B cell (primary cell): ENCODE measurements at regions of chr10 and their contacts with region 1.

Region 1: GRCh38 chr10:97196223-97197029 is 10.7 kb upstream of the SLIT1 start:
- DNase-seq: peak; percentile 82
- ATAC-seq: peak; percentile 76
- H3K4me3 ChIP-seq: peak overlapping the region; percentile 25 to 73 (median 59)
- H3K4me3 Mint-ChIP-seq: peak overlapping the region; percentile 89
- H3K27ac ChIP-seq: no peak overlapping the region
- H3K27ac Mint-ChIP-seq: no peak overlapping the region
- H3K4me1 ChIP-seq: peaks cover 29 to 38% of the 10 kb centered on the region in 2 donors
- H3K4me1 Mint-ChIP-seq: peaks cover 30% of the 10 kb centered on the region
- H3K27me3 ChIP-seq: peaks cover 0 to 30% (median 4%) of the 10 kb centered on the region in 4 experiments
- H3K27me3 Mint-ChIP-seq: peaks cover 34% of the 10 kb centered on the region
- CTCF ChIP-seq: peak; percentile 88

Region 2: GRCh38 chr10:97072851-97073665 is 123.4 kb before region 1 on chr10:
- CTCF ChIA-PET with region 1: interaction called, 75 read pairs
- POLR2A ChIA-PET with region 1: no interaction called
- intact Hi-C with region 1: no loop called
- DNase-seq: peak; percentile 78
- ATAC-seq: peak; percentile 74
- H3K4me3 ChIP-seq: no peak overlapping the region
- H3K4me3 Mint-ChIP-seq: no peak overlapping the region
- H3K27ac ChIP-seq: no peak overlapping the region
- H3K27ac Mint-ChIP-seq: no peak overlapping the region
- H3K4me1 ChIP-seq: no peaks in the 10 kb centered on the region
- H3K4me1 Mint-ChIP-seq: no peaks in the 10 kb centered on the region
- H3K27me3 ChIP-seq: peaks cover 0 to 28% (median 3%) of the 10 kb centered on the region in 4 experiments
- H3K27me3 Mint-ChIP-seq: peaks cover 40% of the 10 kb centered on the region
- CTCF ChIP-seq: peak; percentile 90

Region 3: DNA sequence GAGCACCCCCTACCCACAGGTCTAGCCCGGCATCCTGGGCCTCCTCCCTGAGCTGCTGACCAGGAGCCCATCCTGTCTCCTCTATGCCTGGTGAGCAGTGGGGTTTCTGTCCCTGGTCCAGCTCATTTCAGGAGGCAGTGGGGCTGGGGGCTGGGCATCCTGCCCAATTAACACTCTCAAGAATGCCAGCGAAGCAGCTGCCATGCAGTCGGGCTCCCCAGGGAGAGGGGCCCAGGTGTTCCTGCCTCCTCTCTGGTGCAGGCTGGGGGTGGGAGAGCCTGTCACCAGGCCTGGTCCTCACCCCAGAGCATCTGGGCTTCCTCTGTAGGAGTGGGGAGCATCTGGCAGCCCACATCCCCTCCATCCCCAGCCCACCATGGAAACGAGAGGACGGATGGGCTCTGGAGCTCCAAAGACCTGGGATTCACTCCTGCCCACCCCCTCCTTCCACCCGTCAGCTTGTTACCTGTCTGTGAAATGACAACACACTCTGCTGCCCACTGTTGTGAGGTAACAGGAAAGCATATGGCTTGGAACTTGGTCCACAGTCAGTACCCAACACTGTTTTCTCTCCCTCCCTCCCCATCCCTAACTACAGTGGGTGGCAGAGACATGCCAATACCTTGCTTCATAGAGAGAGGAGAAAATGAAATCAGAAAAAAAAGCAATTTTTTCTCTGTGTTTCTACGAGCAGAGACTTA is 79.8 kb before region 1 on chr10:
- CTCF ChIA-PET with region 1: no interaction called
- POLR2A ChIA-PET with region 1: no interaction called
- intact Hi-C with region 1: no loop called
- DNase-seq: no peak
- ATAC-seq: no peak
- H3K4me3 ChIP-seq: no peak overlapping the region
- H3K4me3 Mint-ChIP-seq: no peak overlapping the region
- H3K27ac ChIP-seq: no peak overlapping the region
- H3K27ac Mint-ChIP-seq: no peak overlapping the region
- H3K4me1 ChIP-seq: no peaks in the 10 kb centered on the region
- H3K4me1 Mint-ChIP-seq: no peaks in the 10 kb centered on the region
- H3K27me3 ChIP-seq: peaks cover 0 to 12% (median under 1%) of the 10 kb centered on the region in 4 experiments
- H3K27me3 Mint-ChIP-seq: peaks cover 32% of the 10 kb centered on the region
- CTCF ChIP-seq: no peak

Region 4: DNA sequence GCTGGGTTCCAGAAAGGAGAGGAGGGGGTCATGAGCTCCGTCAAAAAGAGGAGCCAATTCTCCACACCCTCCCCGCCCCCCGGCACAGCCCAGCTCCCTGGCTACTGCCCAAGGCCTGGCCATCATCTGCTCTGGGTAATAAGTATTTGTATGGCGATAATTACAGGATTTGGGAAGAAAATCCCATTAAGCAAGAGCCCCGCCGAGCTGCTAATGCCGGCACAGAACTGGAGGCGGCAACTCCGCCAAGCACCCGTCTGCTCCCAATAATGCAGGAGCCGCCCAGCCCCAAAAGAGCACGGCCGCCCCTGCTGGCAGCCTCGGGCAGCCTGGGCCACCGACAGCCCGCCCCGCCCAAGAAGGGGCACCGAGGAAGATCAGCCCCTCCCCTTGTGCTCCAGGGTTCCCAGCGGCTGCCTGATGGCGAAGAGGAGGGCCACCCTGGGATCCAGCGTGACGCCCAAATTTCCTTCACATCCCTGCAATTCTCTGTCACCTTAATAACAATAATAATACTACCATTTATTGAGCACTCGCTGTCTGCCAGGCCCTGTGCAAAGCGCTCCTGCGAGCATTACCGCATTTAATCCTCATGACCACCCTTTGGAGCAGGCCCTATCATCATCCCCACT is 16.6 kb before region 1 on chr10:
- CTCF ChIA-PET with region 1: interaction called, 11 read pairs
- POLR2A ChIA-PET with region 1: no interaction called
- intact Hi-C with region 1: no loop called
- DNase-seq: no peak
- ATAC-seq: no peak
- H3K4me3 ChIP-seq: no peak overlapping the region
- H3K4me3 Mint-ChIP-seq: no peak overlapping the region
- H3K27ac ChIP-seq: no peak overlapping the region
- H3K27ac Mint-ChIP-seq: no peak overlapping the region
- H3K4me1 ChIP-seq: peaks cover 0 to 3% of the 10 kb centered on the region in 2 donors
- H3K4me1 Mint-ChIP-seq: peaks cover 6% of the 10 kb centered on the region
- H3K27me3 ChIP-seq: peaks cover 0 to 60% (median 22%) of the 10 kb centered on the region in 4 experiments
- H3K27me3 Mint-ChIP-seq: peaks cover 49% of the 10 kb centered on the region
- CTCF ChIP-seq: no peak

Region 5: GRCh38 chr10:97217299-97217698 is 20.9 kb after region 1 on chr10:
- CTCF ChIA-PET with region 1: interaction called, 140 read pairs
- POLR2A ChIA-PET with region 1: no interaction called
- intact Hi-C with region 1: no loop called
- DNase-seq: no peak
- ATAC-seq: no peak
- H3K4me3 ChIP-seq: no peak overlapping the region
- H3K4me3 Mint-ChIP-seq: no peak overlapping the region
- H3K27ac ChIP-seq: no peak overlapping the region
- H3K27ac Mint-ChIP-seq: no peak overlapping the region
- H3K4me1 ChIP-seq: no peaks in the 10 kb centered on the region
- H3K4me1 Mint-ChIP-seq: no peaks in the 10 kb centered on the region
- H3K27me3 ChIP-seq: no peaks in the 10 kb centered on the region
- H3K27me3 Mint-ChIP-seq: no peaks in the 10 kb centered on the region
- CTCF ChIP-seq: no peak

Region 6: DNA sequence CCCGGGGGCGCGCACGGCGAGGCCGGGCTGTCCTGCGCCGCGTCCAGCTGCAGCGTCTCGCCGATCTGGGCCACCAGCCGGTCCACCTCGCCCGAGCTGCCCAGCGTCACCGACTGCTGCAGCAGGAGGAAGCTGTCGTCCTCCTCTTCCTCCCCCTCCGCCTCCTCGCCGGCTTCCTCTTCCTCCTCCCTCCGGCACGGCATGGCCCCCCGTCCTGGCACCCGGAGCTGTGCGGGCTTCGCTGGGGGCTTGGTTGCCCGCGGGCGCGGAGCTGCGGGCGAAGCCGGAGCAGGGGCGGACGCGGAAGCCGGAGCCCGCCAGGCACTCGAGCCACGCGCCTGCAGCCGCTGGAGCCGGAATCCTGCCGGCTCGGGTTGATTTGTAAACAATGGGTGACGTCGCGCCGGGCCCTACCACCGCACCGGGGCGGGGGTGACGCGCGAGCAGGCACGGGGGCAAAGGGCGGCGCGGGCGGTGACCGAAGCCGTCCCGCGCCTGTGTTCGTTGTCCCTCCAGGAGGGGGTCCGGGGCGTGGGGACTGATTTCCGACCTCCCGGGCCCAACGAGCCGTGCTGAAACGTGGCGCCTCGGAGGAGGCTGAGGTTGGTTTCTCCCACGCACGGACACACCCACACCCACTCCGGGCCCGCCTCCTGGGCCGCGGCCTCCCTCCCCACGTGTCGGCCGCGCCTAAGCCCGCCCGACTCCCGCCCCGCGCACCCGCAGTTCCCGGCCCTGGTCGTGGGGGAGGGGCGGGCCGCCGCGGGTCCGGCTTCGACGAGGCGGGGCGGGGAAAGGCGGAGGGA is 138.1 kb after region 1 on chr10 and contains the start of gene FRAT2:
- CTCF ChIA-PET with region 1: no interaction called
- POLR2A ChIA-PET with region 1: no interaction called
- intact Hi-C with region 1: no loop called
- DNase-seq: peak; percentile 98
- ATAC-seq: peak; percentile 90
- H3K4me3 ChIP-seq: peak within 1 kb of the TSS; percentile 60 to 86 (median 75)
- H3K4me3 Mint-ChIP-seq: peak within 1 kb of the TSS; percentile 88
- H3K27ac ChIP-seq: peak within 1 kb of the TSS; percentile 93 to 100
- H3K27ac Mint-ChIP-seq: peak within 1 kb of the TSS; percentile 98
- H3K4me1 ChIP-seq: peaks cover 29 to 30% of the 10 kb centered on the region in 2 donors
- H3K4me1 Mint-ChIP-seq: peaks cover 33% of the 10 kb centered on the region
- H3K27me3 ChIP-seq: no peaks in the 10 kb centered on the region
- H3K27me3 Mint-ChIP-seq: no peaks in the 10 kb centered on the region
- CTCF ChIP-seq: no peak
- total RNA-seq, gene FRAT2: 30.2 and 31.5 TPM in 2 replicates